Heart left ventricle (tissue), 16 donors: ENCODE measurements at regions of chr2 and their contacts with region 1.

Region 1: DNA sequence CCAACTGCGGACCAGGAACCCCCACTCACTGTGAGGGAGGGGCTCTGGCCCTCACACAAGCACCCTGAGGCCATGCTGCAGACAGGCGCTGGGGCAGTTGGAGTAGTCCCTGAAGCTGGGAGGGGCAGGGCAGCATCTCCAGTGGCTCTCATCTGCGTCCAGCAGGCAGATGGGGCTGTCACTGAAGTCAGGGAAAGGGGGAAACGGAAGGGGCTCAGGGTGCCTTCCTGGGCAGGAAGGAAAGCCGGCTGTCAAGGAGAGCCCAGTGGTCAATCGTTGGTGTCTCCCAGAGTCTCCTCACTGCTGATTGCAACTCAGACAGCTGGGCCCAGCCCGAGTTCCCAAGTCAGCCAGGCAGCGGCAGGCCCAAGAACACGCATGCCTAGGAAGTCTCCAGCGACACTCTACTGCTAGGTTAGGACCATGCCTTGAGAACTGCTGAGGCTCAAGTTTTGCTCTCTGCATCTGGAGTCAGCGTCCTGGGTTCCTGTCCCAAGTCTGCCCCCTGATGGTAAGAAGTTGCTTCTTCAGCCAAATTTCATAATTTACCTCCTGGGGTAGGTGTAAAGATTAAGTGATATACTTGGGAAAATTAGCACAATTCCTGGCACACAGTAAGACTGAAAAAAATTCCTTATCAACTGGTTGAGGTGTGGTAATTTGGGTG is 27.5 kb upstream of the NMUR1 start:
- DNase-seq: peak; percentile 75 to 84 (median 77)
- ATAC-seq: peak; percentile 87 to 95 (median 90)
- H3K4me3 ChIP-seq: no peak overlapping the region
- H3K27ac ChIP-seq: peak overlapping the region in 9 of 12 donors; percentile 29 to 73 (median 42)
- H3K4me1 ChIP-seq: peaks cover 0 to 27% (median 14%) of the 10 kb centered on the region in 12 donors
- H3K27me3 ChIP-seq: peaks cover 0 to 8% (median 0%) of the 10 kb centered on the region in 9 donors
- CTCF ChIP-seq: peak; percentile 65 to 87 (median 73)
- POLR2A ChIP-seq: no peak

Region 2: DNA sequence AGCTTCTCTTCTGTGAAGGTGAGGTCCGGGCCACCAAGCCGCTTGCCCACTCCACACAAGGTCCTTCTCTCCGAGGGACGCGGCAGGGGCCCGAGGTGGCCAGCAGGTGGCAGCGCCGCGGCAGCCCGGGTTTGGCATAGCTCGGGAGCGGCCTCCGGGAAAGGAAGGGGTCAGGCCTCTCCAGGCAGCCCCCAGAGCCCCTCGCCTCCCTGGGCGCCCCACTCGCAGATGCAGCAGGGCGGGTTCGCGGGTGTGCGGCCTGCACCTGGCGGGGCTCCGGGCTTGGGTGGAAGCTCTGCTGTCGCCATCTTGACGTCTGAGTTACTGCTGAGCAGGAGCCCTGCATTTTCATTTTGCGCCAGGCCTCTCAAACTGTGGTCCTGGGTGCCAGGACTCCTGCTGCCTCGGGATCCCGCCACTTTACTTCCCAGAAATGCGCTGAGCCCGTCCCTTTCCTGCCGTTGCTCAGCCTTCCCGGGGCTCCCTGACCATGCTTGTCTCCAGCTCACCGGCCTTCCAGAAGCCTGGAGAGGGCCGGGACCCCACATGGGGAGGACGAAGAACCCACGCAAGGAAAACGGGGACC is 74.8 kb before region 1 on chr2:
- intact Hi-C with region 1: loop called in 9 of 10 experiments (anchors 1 to 10 kb)
- DNase-seq: peak; percentile 75 to 91 (median 82)
- ATAC-seq: peak; percentile 75 to 94 (median 90)
- H3K4me3 ChIP-seq: peak overlapping the region; percentile 24 to 74 (median 64)
- H3K27ac ChIP-seq: peak overlapping the region; percentile 45 to 93 (median 86)
- H3K4me1 ChIP-seq: peaks cover 0 to 14% (median 0%) of the 10 kb centered on the region in 12 donors
- H3K27me3 ChIP-seq: no peaks in the 10 kb centered on the region
- CTCF ChIP-seq: peak; percentile 81 to 98 (median 90)
- POLR2A ChIP-seq: peak in 1 of 2 donors; percentile 33

Region 3: GRCh38 chr2:231514103-231514950 is 43.4 kb before region 1 on chr2:
- intact Hi-C with region 1: loop called in 9 of 10 experiments (anchors 1 to 5 kb)
- DNase-seq: peak; percentile 98 to 99 (median 99)
- ATAC-seq: peak; percentile 99 to 100 (median 100)
- H3K4me3 ChIP-seq: peak overlapping the region; percentile 56 to 89 (median 76)
- H3K27ac ChIP-seq: peak overlapping the region; percentile 48 to 92 (median 86)
- H3K4me1 ChIP-seq: peaks cover 0 to 19% (median 7%) of the 10 kb centered on the region in 12 donors
- H3K27me3 ChIP-seq: no peaks in the 10 kb centered on the region
- CTCF ChIP-seq: no peak
- POLR2A ChIP-seq: peak in 1 of 2 donors; percentile 90

Region 4: GRCh38 chr2:231522799-231523180 is 34.9 kb before region 1 on chr2:
- intact Hi-C with region 1: loop called (anchors 1 to 5 kb)
- DNase-seq: no peak
- ATAC-seq: no peak
- H3K4me3 ChIP-seq: no peak overlapping the region
- H3K27ac ChIP-seq: no peak overlapping the region
- H3K4me1 ChIP-seq: peaks cover 0 to 18% (median 0%) of the 10 kb centered on the region in 12 donors
- H3K27me3 ChIP-seq: no peaks in the 10 kb centered on the region
- CTCF ChIP-seq: no peak
- POLR2A ChIP-seq: no peak

Region 5: GRCh38 chr2:231530091-231531011 is 27.4 kb before region 1 on chr2 and contains the start of gene NMUR1:
- intact Hi-C with region 1: loop called in 4 of 10 experiments (anchors 1 to 2 kb)
- DNase-seq: peak; percentile 56 to 88 (median 64)
- ATAC-seq: peak in 3 of 4 donors; percentile 54 to 82 (median 74)
- H3K4me3 ChIP-seq: peak within 1 kb of the TSS in 11 of 12 donors; percentile 13 to 58 (median 49)
- H3K27ac ChIP-seq: peak within 1 kb of the TSS in 1 of 12 donors; percentile 1
- H3K4me1 ChIP-seq: peaks cover 0 to 11% (median 0%) of the 10 kb centered on the region in 12 donors
- H3K27me3 ChIP-seq: peaks cover 0 to 39% (median 0%) of the 10 kb centered on the region in 9 donors
- CTCF ChIP-seq: peak; percentile 71 to 92 (median 86)
- POLR2A ChIP-seq: no peak
- total RNA-seq, gene NMUR1: 0.12 to 0.71 (median 0.53) TPM in 7 of 9 donors, not detected in the others